CD4-positive, alpha-beta memory T cell (primary cell): ENCODE measurements at regions of chr1 and their contacts with region 1.

Region 1: DNA sequence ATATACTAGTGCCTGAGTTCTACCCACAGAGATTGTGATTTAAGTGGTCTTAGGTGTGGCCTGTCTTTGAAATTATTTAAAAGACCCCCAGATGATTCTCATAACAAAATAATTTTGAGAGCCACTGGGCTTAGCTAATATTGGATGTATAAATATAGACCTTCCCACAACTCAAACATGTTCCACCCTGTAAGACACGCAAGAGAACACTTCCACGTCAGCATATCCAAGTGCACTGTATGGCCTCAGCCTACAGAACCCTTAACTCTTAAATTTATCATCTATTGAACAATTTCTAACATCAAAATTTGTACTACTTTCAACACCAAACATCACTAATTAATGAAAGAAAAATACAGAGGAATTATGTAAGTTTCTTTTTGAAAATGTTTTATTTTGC is 2.5 kb downstream of the FAM177B start:
- DNase-seq: no peak
- H3K4me3 ChIP-seq: no peak overlapping the region
- H3K4me3 Mint-ChIP-seq: no peak overlapping the region
- H3K27ac ChIP-seq: no peak overlapping the region
- H3K27ac Mint-ChIP-seq: peak overlapping the region in 1 of 7 donors; percentile 2
- H3K4me1 ChIP-seq: no peaks in the 10 kb centered on the region
- H3K4me1 Mint-ChIP-seq: peaks cover 0 to under 1% (median 0%) of the 10 kb centered on the region in 4 donors
- H3K27me3 ChIP-seq: no peaks in the 10 kb centered on the region
- H3K27me3 Mint-ChIP-seq: no peaks in the 10 kb centered on the region

Region 2: GRCh38 chr1:223081181-223081994 is 341.9 kb after region 1 on chr1:
- CTCF ChIA-PET with region 1: interaction called, 10 read pairs
- POLR2A ChIA-PET with region 1: no interaction called
- intact Hi-C with region 1: no loop called
- DNase-seq: peak; percentile 56 to 70 (median 64)
- H3K4me3 ChIP-seq: peak overlapping the region in 1 of 2 donors; percentile 44
- H3K4me3 Mint-ChIP-seq: peak overlapping the region; percentile 48 to 78 (median 68)
- H3K27ac ChIP-seq: no peak overlapping the region
- H3K27ac Mint-ChIP-seq: peak overlapping the region in 1 of 7 donors; percentile 48
- H3K4me1 ChIP-seq: peaks cover 4% of the 10 kb centered on the region
- H3K4me1 Mint-ChIP-seq: peaks cover 0 to 2% (median 0%) of the 10 kb centered on the region in 4 donors
- H3K27me3 ChIP-seq: no peaks in the 10 kb centered on the region
- H3K27me3 Mint-ChIP-seq: peaks cover 2 to 8% of the 10 kb centered on the region in 2 donors

Region 3: DNA sequence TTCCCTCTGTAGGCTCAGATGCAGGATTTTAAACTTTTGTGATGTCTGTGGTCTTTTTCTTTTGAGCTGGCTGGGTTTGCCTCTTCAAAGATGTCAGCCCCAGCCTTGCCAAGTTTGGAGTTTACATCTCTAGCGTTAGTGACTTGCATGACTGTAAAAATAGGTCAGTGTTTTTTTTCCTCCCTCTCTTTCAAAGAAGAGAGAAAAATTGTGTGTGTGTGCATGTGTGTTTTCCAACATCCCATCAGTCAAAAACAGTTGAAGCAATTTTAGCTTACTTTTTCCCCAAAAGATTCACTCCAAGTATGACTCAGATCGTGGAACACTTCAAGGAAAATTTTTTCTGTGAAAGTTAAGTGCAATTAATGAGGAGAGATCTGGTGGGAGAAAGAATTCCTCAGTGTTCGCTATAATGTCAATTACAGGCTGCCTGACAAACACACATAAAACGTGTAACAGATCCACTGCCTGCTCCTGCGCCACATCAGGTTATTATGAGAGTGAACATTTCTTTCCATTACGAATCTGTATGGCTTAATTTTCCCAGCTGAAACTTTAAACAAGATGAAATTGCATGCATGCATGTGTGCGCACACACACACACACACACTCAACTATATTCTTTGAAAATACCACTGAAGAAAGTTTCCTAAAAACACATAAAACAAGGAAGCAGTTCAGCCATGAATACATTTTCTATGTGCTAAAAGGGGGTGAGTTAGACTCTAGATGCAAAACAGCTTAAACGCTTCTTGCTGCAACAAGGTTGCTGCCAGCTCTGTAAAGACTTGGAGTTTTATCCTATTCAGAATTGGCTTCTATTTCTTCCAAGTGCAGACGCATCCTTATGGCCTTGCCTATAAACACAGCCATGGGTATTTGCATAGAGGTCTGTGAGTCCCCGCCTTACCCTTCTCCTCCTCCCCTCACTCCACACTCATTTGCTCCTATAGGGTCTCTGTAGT is 348.1 kb after region 1 on chr1:
- CTCF ChIA-PET with region 1: interaction called, 13 read pairs
- POLR2A ChIA-PET with region 1: no interaction called
- intact Hi-C with region 1: no loop called
- DNase-seq: no peak
- H3K4me3 ChIP-seq: no peak overlapping the region
- H3K4me3 Mint-ChIP-seq: no peak overlapping the region
- H3K27ac ChIP-seq: no peak overlapping the region
- H3K27ac Mint-ChIP-seq: no peak overlapping the region
- H3K4me1 ChIP-seq: no peaks in the 10 kb centered on the region
- H3K4me1 Mint-ChIP-seq: peaks cover 0 to 10% (median 1%) of the 10 kb centered on the region in 4 donors
- H3K27me3 ChIP-seq: no peaks in the 10 kb centered on the region
- H3K27me3 Mint-ChIP-seq: no peaks in the 10 kb centered on the region

Region 4: GRCh38 chr1:223123011-223123610 is 383.6 kb after region 1 on chr1:
- CTCF ChIA-PET with region 1: interaction called, 3 read pairs
- POLR2A ChIA-PET with region 1: no interaction called
- intact Hi-C with region 1: loop called (anchors 2 kb)
- DNase-seq: no peak
- H3K4me3 ChIP-seq: peak overlapping the region in 1 of 2 donors; percentile 2
- H3K4me3 Mint-ChIP-seq: peak overlapping the region; percentile 63 to 85 (median 77)
- H3K27ac ChIP-seq: no peak overlapping the region
- H3K27ac Mint-ChIP-seq: peak overlapping the region in 1 of 7 donors; percentile 30
- H3K4me1 ChIP-seq: peaks cover 5% of the 10 kb centered on the region
- H3K4me1 Mint-ChIP-seq: peaks cover 6 to 8% (median 7%) of the 10 kb centered on the region in 4 donors
- H3K27me3 ChIP-seq: no peaks in the 10 kb centered on the region
- H3K27me3 Mint-ChIP-seq: no peaks in the 10 kb centered on the region